Naive thymus-derived CD8-positive, alpha-beta T cell (primary cell): ENCODE measurements at regions of chr18 and their contacts with region 1.

Region 1: DNA sequence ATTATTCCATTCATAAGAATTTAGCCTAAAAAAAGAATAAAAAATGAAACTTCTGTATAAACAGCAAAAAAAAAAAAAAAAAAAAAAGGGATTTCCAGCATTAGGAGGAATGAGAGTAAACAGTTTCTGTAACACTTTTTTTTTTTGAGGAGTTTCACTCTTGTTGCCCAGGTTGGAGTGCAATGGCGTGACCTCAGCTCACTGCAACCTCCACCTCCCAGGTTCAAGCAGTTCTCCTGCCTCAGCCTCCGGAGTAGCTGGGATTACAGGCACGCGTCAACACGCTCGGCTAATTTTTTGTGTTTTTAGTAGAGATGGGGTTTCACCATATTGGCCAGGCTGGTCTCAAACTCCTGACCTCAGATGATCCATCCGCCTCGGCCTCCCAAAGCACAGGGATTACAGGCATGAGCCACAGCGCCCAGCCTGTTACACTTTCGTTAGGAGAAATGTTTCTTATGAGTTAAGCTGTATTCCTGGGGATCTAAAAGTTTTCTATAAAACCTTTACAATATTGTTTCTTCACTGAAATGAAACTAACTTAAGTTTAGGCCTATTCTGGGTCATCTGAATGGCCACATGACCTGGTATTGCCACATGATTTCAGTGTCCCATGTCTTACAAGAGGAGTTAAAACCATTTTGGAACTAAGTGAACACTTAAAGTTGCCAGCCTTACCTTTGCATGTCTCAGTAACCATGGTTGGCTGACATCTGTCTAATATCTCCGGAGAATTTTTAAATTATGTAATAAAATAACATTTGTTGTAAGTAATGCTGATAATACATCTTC is 17.5 kb downstream of the SMAD2 start:
- DNase-seq: no peak
- ATAC-seq: no peak
- H3K4me3 Mint-ChIP-seq: peak overlapping the region in 8 of 10 donors; percentile 14 to 69 (median 40)
- H3K27ac Mint-ChIP-seq: peak overlapping the region; percentile 17 to 89 (median 76)
- H3K4me1 Mint-ChIP-seq: peaks cover 34 to 91% (median 81%) of the 10 kb centered on the region in 4 donors
- H3K27me3 Mint-ChIP-seq: no peaks in the 10 kb centered on the region

Region 2: DNA sequence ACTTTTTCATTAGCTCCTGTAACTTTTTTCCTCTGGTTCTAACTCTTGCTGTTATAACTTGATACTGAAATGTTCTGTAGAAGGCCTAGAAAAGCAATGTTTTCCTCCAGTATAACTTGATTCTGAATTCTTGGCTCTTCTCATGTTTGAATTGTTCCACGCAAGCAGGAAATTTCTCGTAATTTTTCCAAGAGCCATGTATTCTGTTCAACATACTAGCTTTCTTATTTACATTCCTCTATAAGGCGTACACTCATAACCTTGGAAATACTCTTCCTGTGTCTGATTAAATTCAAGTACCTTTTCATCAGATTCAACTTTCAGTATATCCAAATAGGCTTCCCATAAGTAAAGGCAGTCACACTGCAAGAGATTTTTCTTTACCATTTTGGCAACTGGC is 91.7 kb before region 1 on chr18:
- POLR2A ChIA-PET with region 1: no interaction called
- DNase-seq: no peak
- ATAC-seq: no peak
- H3K4me3 Mint-ChIP-seq: no peak overlapping the region
- H3K27ac Mint-ChIP-seq: no peak overlapping the region
- H3K4me1 Mint-ChIP-seq: peaks cover 0 to 2% (median under 1%) of the 10 kb centered on the region in 4 donors
- H3K27me3 Mint-ChIP-seq: no peaks in the 10 kb centered on the region

Region 3: DNA sequence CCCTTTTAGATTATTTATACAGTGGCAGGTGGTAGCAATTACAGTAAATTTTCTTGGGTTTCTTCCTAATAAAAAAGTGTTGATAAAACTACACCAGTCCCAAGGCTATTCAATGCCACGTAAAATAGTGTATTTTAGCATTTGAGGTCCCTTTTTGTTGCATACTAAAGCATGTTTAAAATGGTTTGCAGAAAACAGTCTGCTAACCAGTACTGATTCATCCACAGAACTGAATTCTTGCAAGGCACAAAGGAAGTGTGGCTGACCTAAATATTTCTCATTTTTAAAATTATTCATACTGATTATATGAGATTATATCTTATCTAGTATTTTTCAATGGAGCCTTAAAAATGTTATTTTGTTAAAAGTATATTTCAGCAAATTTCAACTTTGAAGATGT is 80.6 kb before region 1 on chr18:
- POLR2A ChIA-PET with region 1: interaction called, 10 read pairs
- DNase-seq: no peak
- ATAC-seq: no peak
- H3K4me3 Mint-ChIP-seq: no peak overlapping the region
- H3K27ac Mint-ChIP-seq: peak overlapping the region in 3 of 10 donors; percentile 14 to 84 (median 28)
- H3K4me1 Mint-ChIP-seq: peaks cover 0 to 5% (median 0%) of the 10 kb centered on the region in 4 donors
- H3K27me3 Mint-ChIP-seq: no peaks in the 10 kb centered on the region

Region 4: DNA sequence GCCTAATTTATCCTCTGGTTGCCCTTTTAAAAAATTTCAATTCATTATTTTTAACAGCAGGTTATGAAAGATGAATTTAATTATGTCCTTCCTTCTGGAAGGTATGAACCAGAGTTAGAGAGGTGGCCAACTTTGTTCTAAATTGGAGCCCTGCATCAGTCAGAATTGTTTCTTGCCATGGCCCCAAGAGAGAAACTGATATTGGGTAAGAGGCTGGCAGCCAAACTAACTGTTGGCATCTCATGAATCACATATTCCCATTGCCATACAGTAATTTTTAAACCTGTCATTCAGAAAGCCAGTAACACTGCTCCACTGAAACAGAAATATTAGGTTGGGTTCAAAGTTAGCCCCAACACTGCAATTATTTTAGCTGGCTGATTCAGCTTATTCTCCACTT is 49.9 kb before region 1 on chr18:
- POLR2A ChIA-PET with region 1: no interaction called
- DNase-seq: no peak
- ATAC-seq: no peak
- H3K4me3 Mint-ChIP-seq: no peak overlapping the region
- H3K27ac Mint-ChIP-seq: no peak overlapping the region
- H3K4me1 Mint-ChIP-seq: peaks cover 0 to 3% (median 0%) of the 10 kb centered on the region in 4 donors
- H3K27me3 Mint-ChIP-seq: no peaks in the 10 kb centered on the region

Region 5: DNA sequence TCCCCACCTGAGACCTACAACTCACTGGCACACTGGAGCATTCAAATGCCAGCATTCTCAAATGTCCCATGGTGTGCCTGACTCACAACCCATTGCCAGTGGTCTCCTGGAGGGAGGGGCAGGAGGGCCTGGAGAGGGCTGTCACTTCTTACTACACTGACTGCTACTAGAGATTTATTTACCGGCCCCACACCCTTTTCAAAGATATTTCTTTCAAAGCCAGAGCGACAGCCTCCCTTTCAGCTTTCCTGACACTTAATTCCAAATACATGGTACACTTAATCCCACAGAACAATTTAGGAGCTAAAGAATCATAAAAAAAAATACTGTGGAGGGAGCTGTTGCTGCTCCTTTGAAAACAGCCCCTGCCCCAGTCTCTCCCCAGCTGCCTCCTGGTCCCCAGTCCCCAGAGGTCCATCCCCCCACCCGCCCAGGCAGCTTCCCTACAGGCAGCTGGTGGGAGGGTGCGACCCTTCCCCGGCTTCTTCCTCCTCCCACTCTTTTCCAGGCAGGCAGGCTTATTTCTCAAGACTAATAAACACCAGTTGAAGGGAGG is 146.5 kb after region 1 on chr18:
- POLR2A ChIA-PET with region 1: no interaction called
- DNase-seq: no peak
- ATAC-seq: no peak
- H3K4me3 Mint-ChIP-seq: no peak overlapping the region
- H3K27ac Mint-ChIP-seq: no peak overlapping the region
- H3K4me1 Mint-ChIP-seq: no peaks in the 10 kb centered on the region
- H3K27me3 Mint-ChIP-seq: peaks cover 26 to 54% (median 39%) of the 10 kb centered on the region in 5 donors